Ovary (tissue), 10 donors: ENCODE measurements at regions of chr7 and their contacts with region 1.

Region 1: DNA sequence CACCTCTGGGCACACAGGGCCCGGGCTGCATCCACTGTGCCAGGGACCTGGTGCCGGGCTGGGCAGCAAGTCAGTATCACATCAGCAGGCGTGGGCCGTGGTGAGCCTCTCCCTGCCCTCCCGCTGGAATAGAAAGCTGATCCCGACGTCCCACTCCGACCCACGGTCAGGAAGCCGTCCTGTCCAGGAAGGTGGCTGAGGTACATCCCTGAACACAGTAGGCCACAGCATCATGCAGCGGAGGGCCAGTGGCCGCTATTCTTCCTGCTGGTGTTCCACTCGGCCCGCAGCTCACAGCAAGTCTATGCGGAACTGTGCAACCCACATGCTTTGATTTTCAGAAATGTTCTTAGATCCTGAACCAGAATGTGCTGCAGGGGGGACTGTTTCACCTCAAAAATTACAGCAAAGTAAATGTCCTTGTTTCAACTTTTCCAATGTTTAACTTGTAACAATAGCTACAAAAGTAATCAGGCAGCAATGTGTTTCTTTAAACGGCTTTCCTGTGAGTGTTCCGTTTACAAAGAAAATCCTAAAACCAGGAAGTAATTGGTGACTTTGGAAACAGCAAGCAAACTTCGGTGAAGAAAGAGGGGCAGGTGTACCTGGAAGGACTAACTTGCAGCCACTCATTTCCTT is 675 bp upstream of the GPR146 start:
- DNase-seq: no peak
- H3K4me3 ChIP-seq: peak overlapping the region; percentile 33
- H3K27ac ChIP-seq: peak overlapping the region; percentile 49 to 71
- H3K4me1 ChIP-seq: peaks cover 19% of the 10 kb centered on the region
- H3K27me3 ChIP-seq: no peaks in the 10 kb centered on the region
- CTCF ChIP-seq: no peak
- EP300 ChIP-seq: no peak
- POLR2A ChIP-seq: no peak

Region 2: GRCh38 chr7:1004018-1004852 is 39.4 kb before region 1 on chr7:
- intact Hi-C with region 1: no loop called
- DNase-seq: no peak
- H3K4me3 ChIP-seq: no peak overlapping the region
- H3K27ac ChIP-seq: no peak overlapping the region
- H3K4me1 ChIP-seq: no peaks in the 10 kb centered on the region
- H3K27me3 ChIP-seq: no peaks in the 10 kb centered on the region
- CTCF ChIP-seq: no peak
- EP300 ChIP-seq: no peak
- POLR2A ChIP-seq: no peak

Region 3: GRCh38 chr7:1028031-1028770 is 15.5 kb before region 1 on chr7:
- intact Hi-C with region 1: loop called in 1 of 4 experiments (anchors 2 kb)
- DNase-seq: peak; percentile 94 to 97 (median 96)
- H3K4me3 ChIP-seq: peak overlapping the region; percentile 69
- H3K27ac ChIP-seq: peak overlapping the region; percentile 96 to 99
- H3K4me1 ChIP-seq: peaks cover 1% of the 10 kb centered on the region
- H3K27me3 ChIP-seq: no peaks in the 10 kb centered on the region
- CTCF ChIP-seq: no peak
- EP300 ChIP-seq: no peak
- POLR2A ChIP-seq: peak; percentile 88

Region 4: DNA sequence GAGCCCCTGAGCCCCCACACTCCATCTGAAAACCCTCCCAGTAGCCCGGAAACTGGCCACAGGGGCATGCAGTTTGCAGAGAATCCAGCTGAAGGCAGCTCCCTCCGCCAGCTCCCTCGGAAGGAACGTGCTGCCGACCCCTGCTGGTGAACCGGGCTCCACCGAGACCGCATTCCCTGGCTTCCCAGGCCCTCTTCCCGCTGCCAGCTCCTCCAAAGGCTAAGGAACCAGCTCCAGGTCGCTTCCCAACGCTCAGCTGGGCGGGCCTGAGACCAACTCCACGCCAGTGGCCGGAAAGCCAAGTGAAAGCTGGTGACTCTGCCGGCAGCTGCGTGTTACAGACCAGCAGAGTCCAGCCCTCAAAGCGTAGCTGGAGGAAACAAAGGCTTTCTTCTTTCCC is 80.0 kb after region 1 on chr7:
- intact Hi-C with region 1: no loop called
- DNase-seq: peak; percentile 79 to 88 (median 85)
- H3K4me3 ChIP-seq: no peak overlapping the region
- H3K27ac ChIP-seq: peak overlapping the region in 1 of 2 donors; percentile 55
- H3K4me1 ChIP-seq: peaks cover 18% of the 10 kb centered on the region
- H3K27me3 ChIP-seq: no peaks in the 10 kb centered on the region
- CTCF ChIP-seq: peak; percentile 46 to 66 (median 62)
- EP300 ChIP-seq: no peak
- POLR2A ChIP-seq: no peak